WTC11 (cell line): ENCODE measurements at regions of chr2 and their contacts with region 1.

Region 1: DNA sequence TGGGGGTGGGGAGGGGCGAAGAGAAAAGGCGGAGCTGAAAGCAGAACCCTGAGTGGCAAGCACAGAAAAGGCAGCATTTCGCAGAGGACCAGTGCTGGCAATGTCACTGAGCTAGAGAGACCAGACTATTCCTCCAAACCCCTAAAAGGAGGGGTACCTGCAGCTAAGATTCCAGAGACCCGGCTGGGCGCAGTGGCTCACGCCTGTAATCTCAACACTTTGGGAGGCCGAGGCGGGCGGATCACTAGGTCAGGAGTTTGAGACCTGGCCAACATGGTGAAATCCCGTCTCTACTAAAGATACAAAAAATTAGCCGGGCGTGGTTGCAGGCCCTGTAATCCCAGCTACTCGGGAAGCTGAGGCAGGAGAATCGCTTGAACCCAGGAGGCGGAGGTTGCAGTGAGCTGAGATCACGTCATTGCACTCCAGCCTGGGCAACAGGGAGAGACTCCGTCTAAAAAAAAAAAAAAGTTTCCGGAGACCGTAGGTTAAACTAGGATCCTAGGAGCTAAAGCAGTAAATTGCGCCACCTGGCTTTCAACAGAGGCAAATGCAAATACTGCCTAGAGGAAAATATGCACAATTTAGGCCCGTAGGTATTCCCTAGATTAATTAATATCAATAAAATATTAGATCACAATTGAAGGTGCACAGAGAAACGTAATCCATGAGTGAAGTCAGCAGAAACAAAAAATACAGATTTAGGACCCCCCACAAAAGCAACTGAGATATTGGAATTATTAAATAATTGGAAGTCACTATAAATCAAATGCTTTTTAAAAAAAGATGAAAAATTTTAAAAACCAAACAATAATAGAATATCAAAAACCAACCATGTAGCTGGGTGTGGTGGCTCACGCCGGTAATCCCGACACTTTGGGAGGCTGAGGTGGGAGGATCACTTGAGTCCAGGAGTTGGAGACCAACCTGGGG is 4.9 kb downstream of the UCN start:
- DNase-seq: no peak
- ATAC-seq: peak; percentile 21
- H3K4me3 Mint-ChIP-seq: peak overlapping the region; percentile 50
- H3K27ac Mint-ChIP-seq: no peak overlapping the region
- H3K4me1 Mint-ChIP-seq: peaks cover 8% of the 10 kb centered on the region; the same call in 1 of the 2 replicates
- H3K27me3 Mint-ChIP-seq: peaks cover 39% of the 10 kb centered on the region
- CTCF ChIP-seq: peak; percentile 92

Region 2: DNA sequence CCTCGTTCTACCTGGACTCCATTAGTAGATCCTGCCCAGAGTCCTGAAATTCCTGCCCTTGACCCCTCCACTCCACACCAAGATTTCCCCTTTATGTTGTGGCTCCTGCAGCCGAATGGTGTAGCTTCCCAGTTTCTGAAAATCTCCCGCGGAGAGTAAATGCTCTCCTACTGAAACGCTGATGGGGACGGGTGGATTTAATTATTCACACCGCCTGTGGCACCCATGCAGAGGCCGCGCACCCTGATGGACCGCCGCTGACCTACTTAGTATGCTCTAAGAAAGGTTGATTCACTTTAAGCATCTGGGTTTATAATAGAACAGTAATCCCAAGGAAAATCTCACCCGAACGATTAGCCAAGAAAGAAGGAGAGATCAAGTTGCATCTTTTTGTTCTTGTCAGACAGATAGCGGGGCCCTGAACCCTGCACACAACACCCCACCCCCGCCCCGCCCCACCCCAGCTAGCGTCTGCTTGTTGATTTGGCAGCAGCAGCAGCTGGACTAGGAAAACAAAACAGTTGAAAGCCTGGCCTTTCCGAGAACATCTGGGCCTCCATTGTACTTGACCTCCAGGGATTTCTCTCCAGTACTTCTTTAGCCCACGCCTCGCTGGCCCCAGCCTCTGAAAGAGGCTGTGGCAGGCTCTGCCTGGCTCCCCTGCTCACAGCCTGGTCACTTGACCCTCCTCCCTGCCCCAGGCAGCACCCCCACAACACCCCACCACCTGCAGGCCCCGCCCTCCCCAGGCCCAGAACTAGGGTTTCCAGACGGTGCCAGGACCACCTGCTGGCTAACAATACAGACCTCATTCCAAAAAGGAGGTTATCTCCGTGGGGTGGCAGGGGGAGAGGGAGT is 401.8 kb before region 1 on chr2:
- CTCF ChIA-PET with region 1: no interaction called
- POLR2A ChIA-PET with region 1: no interaction called
- DNase-seq: peak; percentile 69
- ATAC-seq: peak; percentile 77
- H3K4me3 Mint-ChIP-seq: peak overlapping the region; percentile 49
- H3K27ac Mint-ChIP-seq: no peak overlapping the region; the same call in 1 of the 2 replicates
- H3K4me1 Mint-ChIP-seq: peaks cover 25% of the 10 kb centered on the region
- H3K27me3 Mint-ChIP-seq: peaks cover 9% of the 10 kb centered on the region
- CTCF ChIP-seq: no peak

Region 3: GRCh38 chr2:27133905-27134780 is 169.2 kb before region 1 on chr2 and contains the start of gene PREB:
- CTCF ChIA-PET with region 1: interaction called, 10 read pairs
- POLR2A ChIA-PET with region 1: no interaction called
- DNase-seq: peak; percentile 99
- ATAC-seq: peak; percentile 93
- H3K4me3 Mint-ChIP-seq: peak within 1 kb of the TSS; percentile 90
- H3K27ac Mint-ChIP-seq: peak within 1 kb of the TSS; percentile 98
- H3K4me1 Mint-ChIP-seq: peaks cover 14% of the 10 kb centered on the region
- H3K27me3 Mint-ChIP-seq: peaks cover 5% of the 10 kb centered on the region
- CTCF ChIP-seq: no peak
- total RNA-seq, gene PREB: 56.7 to 69.2 TPM (median 56.7 TPM) in 3 replicates

Region 4: GRCh38 chr2:27264753-27265535 is 38.4 kb before region 1 on chr2:
- CTCF ChIA-PET with region 1: interaction called, 53 read pairs
- POLR2A ChIA-PET with region 1: no interaction called
- DNase-seq: peak; percentile 86
- ATAC-seq: peak; percentile 57
- H3K4me3 Mint-ChIP-seq: peak overlapping the region; percentile 93
- H3K27ac Mint-ChIP-seq: no peak overlapping the region
- H3K4me1 Mint-ChIP-seq: peaks cover 26% of the 10 kb centered on the region
- H3K27me3 Mint-ChIP-seq: peaks cover 27% of the 10 kb centered on the region
- CTCF ChIP-seq: peak; percentile 46; the same call in 1 of the 2 replicates

Region 5: DNA sequence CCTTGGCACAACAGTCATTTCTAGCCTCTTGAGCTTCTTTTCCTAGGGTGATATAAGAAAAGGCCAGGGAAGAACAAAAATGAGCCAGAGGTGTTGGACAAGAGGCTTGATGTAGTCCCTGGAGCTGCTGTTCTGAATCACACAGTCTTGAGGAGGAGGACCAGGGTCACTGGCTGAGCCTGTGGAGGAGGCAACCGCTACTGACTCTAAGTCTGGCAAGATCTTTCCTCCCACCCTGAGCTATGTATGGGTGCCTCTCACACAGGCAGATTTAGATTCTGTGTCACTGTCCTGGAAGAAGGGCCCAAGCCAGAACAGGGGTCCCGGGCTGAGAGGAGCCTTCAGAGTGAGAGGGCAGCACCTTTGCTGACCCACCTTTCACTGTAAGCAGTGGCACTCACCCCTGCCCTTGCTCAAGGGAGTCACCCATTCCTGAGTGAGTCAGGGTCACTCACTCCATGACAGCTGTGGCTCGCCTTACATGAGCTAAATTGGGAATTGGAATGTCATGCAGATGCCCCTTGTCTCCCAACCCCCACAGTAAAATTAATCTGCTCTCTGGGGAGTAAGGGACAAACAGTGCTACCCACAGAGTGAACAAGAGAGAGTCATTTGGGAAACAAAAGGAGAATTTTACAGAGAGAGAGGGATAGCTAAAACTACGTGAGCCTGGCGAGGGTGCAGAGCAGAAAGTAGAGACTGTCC is 21.4 kb before region 1 on chr2 and contains the start of gene TRIM54:
- CTCF ChIA-PET with region 1: interaction called, 129 read pairs
- POLR2A ChIA-PET with region 1: no interaction called
- DNase-seq: no peak
- ATAC-seq: peak; percentile 59
- H3K4me3 Mint-ChIP-seq: peak within 1 kb of the TSS; percentile 54
- H3K27ac Mint-ChIP-seq: peak within 1 kb of the TSS; percentile 35
- H3K4me1 Mint-ChIP-seq: peaks cover 46% of the 10 kb centered on the region
- H3K27me3 Mint-ChIP-seq: no peaks in the 10 kb centered on the region; the same call in 1 of the 2 replicates
- CTCF ChIP-seq: no peak
- total RNA-seq, gene TRIM54: 3.0 to 3.4 TPM (median 3.3 TPM) in 3 replicates

Region 6: GRCh38 chr2:27313882-27314645 is 10.7 kb after region 1 on chr2:
- CTCF ChIA-PET with region 1: interaction called, 20 read pairs
- POLR2A ChIA-PET with region 1: interaction called, 4 read pairs
- DNase-seq: no peak
- ATAC-seq: no peak
- H3K4me3 Mint-ChIP-seq: no peak overlapping the region
- H3K27ac Mint-ChIP-seq: no peak overlapping the region
- H3K4me1 Mint-ChIP-seq: peaks cover 6% of the 10 kb centered on the region
- H3K27me3 Mint-ChIP-seq: peaks cover 6% of the 10 kb centered on the region
- CTCF ChIP-seq: no peak

Region 7: GRCh38 chr2:27400348-27401135 is 97.2 kb after region 1 on chr2:
- CTCF ChIA-PET with region 1: no interaction called
- POLR2A ChIA-PET with region 1: no interaction called
- DNase-seq: no peak
- ATAC-seq: no peak
- H3K4me3 Mint-ChIP-seq: no peak overlapping the region
- H3K27ac Mint-ChIP-seq: peak overlapping the region; percentile 39
- H3K4me1 Mint-ChIP-seq: peaks cover 3% of the 10 kb centered on the region
- H3K27me3 Mint-ChIP-seq: no peaks in the 10 kb centered on the region
- CTCF ChIP-seq: no peak